ENCODE measurements at regions of chr1 and their contacts with region 1.

Region 1: GRCh38 chr1:19974822-19975416 is 4.5 kb downstream of the PLA2G2A start:
- DNase-seq: peak; percentile 34 to 64
- H3K4me3 ChIP-seq: no peak overlapping the region
- H3K27ac ChIP-seq: no peak overlapping the region
- H3K4me1 ChIP-seq: peaks cover 0 to 8% (median 0%) of the 10 kb centered on the region in 4 experiments; a peak in 2 of 7 replicates
- H3K27me3 ChIP-seq: no peaks in the 10 kb centered on the region
- CTCF ChIP-seq: peak; percentile 87 to 100 (median 95)
- EP300 ChIP-seq: no peak
- POLR2A ChIP-seq: no peak
- RAD21 ChIP-seq: peak; percentile 100

Region 2: DNA sequence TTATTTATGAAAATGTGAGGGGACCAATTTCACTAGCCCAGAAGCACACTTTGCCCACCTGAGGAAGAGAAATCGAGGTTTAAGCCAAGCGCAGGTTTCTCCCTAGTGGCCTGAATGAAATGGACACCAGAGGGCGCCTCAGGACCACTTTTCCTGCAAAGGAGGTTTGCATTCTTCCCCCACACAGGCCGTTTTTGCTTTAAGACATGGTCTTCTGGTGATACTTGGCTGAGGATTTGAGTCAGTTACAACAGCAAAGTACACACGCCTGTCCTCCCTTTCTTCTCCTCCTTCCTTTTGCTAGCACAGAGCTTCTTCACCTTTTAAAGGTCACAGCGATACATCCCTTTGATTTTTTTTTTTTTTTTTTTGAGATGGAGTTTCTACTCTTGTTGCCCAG is 56.9 kb before region 1 on chr1:
- CTCF ChIA-PET with region 1: interaction called, 15 read pairs
- POLR2A ChIA-PET with region 1: no interaction called
- DNase-seq: peak; percentile 43 to 92
- H3K4me3 ChIP-seq: no peak overlapping the region
- H3K27ac ChIP-seq: no peak overlapping the region
- H3K4me1 ChIP-seq: peaks cover 0 to under 1% (median 0%) of the 10 kb centered on the region in 4 experiments; a peak in 1 of 7 replicates
- H3K27me3 ChIP-seq: no peaks in the 10 kb centered on the region
- CTCF ChIP-seq: peak; percentile 72 to 95 (median 87)
- EP300 ChIP-seq: no peak
- POLR2A ChIP-seq: no peak
- RAD21 ChIP-seq: peak; percentile 96 to 98

Region 3: DNA sequence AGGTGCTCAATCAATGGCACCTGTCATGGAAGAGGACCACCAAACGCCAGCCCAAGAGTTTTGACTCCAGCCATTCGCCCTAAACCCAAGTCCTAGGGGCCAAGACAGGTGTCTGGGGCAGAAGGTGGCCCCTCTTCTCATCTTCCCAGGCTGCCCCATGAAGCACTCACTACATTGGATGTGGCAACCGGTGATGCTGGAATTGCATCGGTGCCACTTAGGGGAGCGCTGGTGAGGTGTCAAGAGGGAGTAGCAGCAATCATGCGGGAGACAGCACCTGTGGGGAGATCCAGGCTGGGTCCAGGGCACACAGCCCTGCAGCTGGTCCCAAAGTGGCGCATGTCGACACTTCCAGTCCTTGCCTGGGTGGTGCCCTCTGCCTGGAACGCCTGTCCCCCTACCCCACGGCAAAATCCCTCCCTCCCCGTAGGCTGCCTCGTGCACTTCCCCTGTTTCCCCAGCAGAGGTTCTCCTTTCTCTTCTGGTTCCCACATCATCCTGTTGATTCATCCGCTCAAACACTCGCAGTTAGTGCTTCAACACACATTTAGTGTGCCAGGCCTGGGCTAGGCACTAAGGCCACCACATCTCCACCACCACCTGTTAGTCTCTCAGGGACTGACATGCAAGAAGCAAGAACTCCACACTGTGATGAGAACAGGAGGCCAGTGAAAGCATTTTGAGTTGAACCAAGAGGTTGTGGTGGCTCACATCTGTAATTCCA is 125.9 kb after region 1 on chr1:
- CTCF ChIA-PET with region 1: interaction called, 32 read pairs
- POLR2A ChIA-PET with region 1: no interaction called
- DNase-seq: peak; percentile 47 to 75
- H3K4me3 ChIP-seq: no peak overlapping the region
- H3K27ac ChIP-seq: no peak overlapping the region
- H3K4me1 ChIP-seq: peaks cover 0 to 3% (median 0%) of the 10 kb centered on the region in 4 experiments; a peak in 2 of 7 replicates
- H3K27me3 ChIP-seq: no peaks in the 10 kb centered on the region; a peak in 1 of 7 replicates
- CTCF ChIP-seq: peak; percentile 67 to 89 (median 79)
- EP300 ChIP-seq: no peak
- POLR2A ChIP-seq: no peak
- RAD21 ChIP-seq: peak; percentile 87 to 90

Region 4: DNA sequence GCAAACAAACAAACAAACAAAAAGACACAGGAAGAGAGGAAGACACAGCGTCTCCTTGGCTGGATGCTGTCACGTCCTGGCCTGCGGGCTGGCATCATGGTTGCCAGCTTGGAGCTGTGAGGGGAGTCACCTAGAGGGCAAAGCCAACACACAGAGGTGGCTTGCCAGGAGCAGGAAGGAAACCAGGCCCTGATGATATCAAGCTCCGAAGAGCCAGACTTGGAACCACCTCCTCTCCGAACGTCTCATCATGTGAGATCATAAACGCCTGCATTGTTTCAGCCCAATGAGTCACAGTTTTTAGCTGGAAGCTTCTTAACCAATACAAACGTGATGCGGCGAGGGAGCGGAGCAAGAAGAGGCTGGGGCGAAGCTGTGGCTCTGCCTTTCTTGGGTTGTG is 135.8 kb after region 1 on chr1:
- CTCF ChIA-PET with region 1: interaction called, 16 read pairs
- POLR2A ChIA-PET with region 1: no interaction called
- DNase-seq: no peak
- H3K4me3 ChIP-seq: no peak overlapping the region
- H3K27ac ChIP-seq: no peak overlapping the region
- H3K4me1 ChIP-seq: peaks cover 2 to 5% (median 3%) of the 10 kb centered on the region in 4 experiments; a peak in 4 of 7 replicates
- H3K27me3 ChIP-seq: no peaks in the 10 kb centered on the region
- CTCF ChIP-seq: no peak
- EP300 ChIP-seq: no peak
- POLR2A ChIP-seq: no peak
- RAD21 ChIP-seq: no peak

Region 5: GRCh38 chr1:20194757-20195461 is 220.0 kb after region 1 on chr1:
- CTCF ChIA-PET with region 1: interaction called, 13 read pairs
- POLR2A ChIA-PET with region 1: no interaction called
- DNase-seq: peak in 1 of 2 experiments; percentile 82
- H3K4me3 ChIP-seq: no peak overlapping the region; a peak in 1 of 8 replicates
- H3K27ac ChIP-seq: no peak overlapping the region
- H3K4me1 ChIP-seq: peaks cover 0 to 7% (median under 1%) of the 10 kb centered on the region in 4 experiments; a peak in 4 of 7 replicates
- H3K27me3 ChIP-seq: peaks cover 0 to 2% (median 0%) of the 10 kb centered on the region in 4 experiments; a peak in 2 of 7 replicates
- CTCF ChIP-seq: peak; percentile 83 to 92 (median 91)
- EP300 ChIP-seq: no peak
- POLR2A ChIP-seq: no peak
- RAD21 ChIP-seq: peak; percentile 67 to 77

Measured in H1 (cell line).